ENCODE measurements at regions of chr11 and their contacts with region 1.

Region 1: GRCh38 chr11:126062679-126063506 is at the start of gene CDON:
- DNase-seq: peak; percentile 86
- ATAC-seq: peak; percentile 91
- H3K4me3 ChIP-seq: peak within 1 kb of the TSS; percentile 75 to 86 (median 80)
- H3K27ac ChIP-seq: peak within 1 kb of the TSS; percentile 100
- H3K4me1 ChIP-seq: peaks cover 53% of the 10 kb centered on the region
- H3K27me3 ChIP-seq: no peaks in the 10 kb centered on the region
- CTCF ChIP-seq: peak; percentile 60
- EP300 ChIP-seq: peak in 1 of 2 experiments; percentile 4; a peak in 1 of 4 replicates
- POLR2A ChIP-seq: peak in 1 of 2 experiments; percentile 71; a peak in 2 of 4 replicates
- RAD21 ChIP-seq: peak; percentile 74
- total RNA-seq, gene CDON: 8.4 and 12.8 TPM in 2 replicates

Region 2: GRCh38 chr11:125923012-125923579 is 139.8 kb before region 1 on chr11:
- CTCF ChIA-PET with region 1: interaction called, 14 read pairs
- POLR2A ChIA-PET with region 1: no interaction called
- in situ Hi-C with region 1: no loop called
- intact Hi-C with region 1: loop called (anchors 1 kb)
- DNase-seq: peak; percentile 77
- ATAC-seq: peak; percentile 57
- H3K4me3 ChIP-seq: no peak overlapping the region
- H3K27ac ChIP-seq: no peak overlapping the region
- H3K4me1 ChIP-seq: peaks cover 67% of the 10 kb centered on the region
- H3K27me3 ChIP-seq: no peaks in the 10 kb centered on the region
- CTCF ChIP-seq: peak; percentile 86
- EP300 ChIP-seq: no peak
- POLR2A ChIP-seq: no peak
- RAD21 ChIP-seq: peak; percentile 84

Region 3: GRCh38 chr11:125980421-125980820 is 82.5 kb before region 1 on chr11:
- CTCF ChIA-PET with region 1: no interaction called
- POLR2A ChIA-PET with region 1: no interaction called
- in situ Hi-C with region 1: no loop called
- intact Hi-C with region 1: loop called (anchors 5 kb)
- DNase-seq: no peak
- ATAC-seq: no peak
- H3K4me3 ChIP-seq: no peak overlapping the region
- H3K27ac ChIP-seq: no peak overlapping the region
- H3K4me1 ChIP-seq: peaks cover 45% of the 10 kb centered on the region
- H3K27me3 ChIP-seq: no peaks in the 10 kb centered on the region
- CTCF ChIP-seq: no peak
- EP300 ChIP-seq: no peak
- POLR2A ChIP-seq: no peak
- RAD21 ChIP-seq: no peak

Region 4: DNA sequence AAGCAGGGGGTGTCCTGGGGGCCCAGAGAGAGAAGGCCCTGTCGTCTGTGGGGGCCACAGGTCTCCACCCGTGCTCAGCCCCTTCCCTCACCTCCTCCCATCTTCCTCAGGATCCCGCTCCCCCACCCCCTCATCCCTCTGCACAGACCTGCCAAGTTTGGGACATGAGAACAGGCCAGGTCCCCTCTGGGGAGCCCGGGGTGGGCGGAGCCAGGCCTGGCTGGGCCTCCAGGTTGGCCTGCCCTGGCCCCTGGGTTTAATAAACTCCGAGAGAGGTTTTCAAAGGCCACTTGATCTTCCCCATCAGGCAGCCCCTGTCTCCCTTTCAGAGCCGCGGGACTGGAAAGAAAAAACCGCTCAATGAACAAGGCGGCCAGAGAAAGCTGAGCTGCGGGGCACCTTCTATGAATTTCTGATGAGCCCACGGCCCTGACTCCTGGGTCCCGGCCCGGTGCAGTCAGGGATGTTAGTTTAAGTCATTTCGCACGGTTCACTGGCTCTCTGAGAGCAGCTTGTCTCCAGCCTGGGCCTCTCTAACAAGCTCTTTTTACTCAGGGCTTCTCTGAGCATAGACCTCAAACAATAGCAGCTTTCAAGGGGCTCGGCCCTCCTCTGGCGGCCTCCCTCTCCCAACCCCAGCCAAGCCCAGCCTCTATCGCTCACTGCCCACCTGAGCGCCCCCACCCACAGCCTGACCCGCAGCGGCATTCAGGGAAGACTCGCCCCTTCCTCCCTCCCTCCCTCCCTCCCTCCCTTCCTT is 83.7 kb after region 1 on chr11:
- CTCF ChIA-PET with region 1: no interaction called
- POLR2A ChIA-PET with region 1: interaction called, 16 read pairs
- in situ Hi-C with region 1: no loop called
- intact Hi-C with region 1: loop called (anchors 2 kb)
- DNase-seq: peak; percentile 84
- ATAC-seq: peak; percentile 65
- H3K4me3 ChIP-seq: peak overlapping the region; percentile 46 to 83 (median 55)
- H3K27ac ChIP-seq: peak overlapping the region; percentile 88
- H3K4me1 ChIP-seq: peaks cover 78% of the 10 kb centered on the region
- H3K27me3 ChIP-seq: no peaks in the 10 kb centered on the region
- CTCF ChIP-seq: no peak
- EP300 ChIP-seq: no peak
- POLR2A ChIP-seq: peak in 1 of 2 experiments; percentile 37; a peak in 1 of 4 replicates
- RAD21 ChIP-seq: no peak

Region 5: GRCh38 chr11:126194121-126194543 is 131.2 kb after region 1 on chr11:
- CTCF ChIA-PET with region 1: no interaction called
- POLR2A ChIA-PET with region 1: interaction called, 6 read pairs
- in situ Hi-C with region 1: loop called (anchors 10 kb)
- intact Hi-C with region 1: no loop called
- DNase-seq: peak; percentile 44
- ATAC-seq: no peak
- H3K4me3 ChIP-seq: no peak overlapping the region
- H3K27ac ChIP-seq: peak overlapping the region; percentile 52
- H3K4me1 ChIP-seq: peaks cover 51% of the 10 kb centered on the region
- H3K27me3 ChIP-seq: no peaks in the 10 kb centered on the region
- CTCF ChIP-seq: peak; percentile 79
- EP300 ChIP-seq: no peak
- POLR2A ChIP-seq: no peak
- RAD21 ChIP-seq: peak; percentile 88

Measured in HepG2 (cell line).